B cell (primary cell): ENCODE measurements at regions of chr12 and their contacts with region 1.

Region 1: DNA sequence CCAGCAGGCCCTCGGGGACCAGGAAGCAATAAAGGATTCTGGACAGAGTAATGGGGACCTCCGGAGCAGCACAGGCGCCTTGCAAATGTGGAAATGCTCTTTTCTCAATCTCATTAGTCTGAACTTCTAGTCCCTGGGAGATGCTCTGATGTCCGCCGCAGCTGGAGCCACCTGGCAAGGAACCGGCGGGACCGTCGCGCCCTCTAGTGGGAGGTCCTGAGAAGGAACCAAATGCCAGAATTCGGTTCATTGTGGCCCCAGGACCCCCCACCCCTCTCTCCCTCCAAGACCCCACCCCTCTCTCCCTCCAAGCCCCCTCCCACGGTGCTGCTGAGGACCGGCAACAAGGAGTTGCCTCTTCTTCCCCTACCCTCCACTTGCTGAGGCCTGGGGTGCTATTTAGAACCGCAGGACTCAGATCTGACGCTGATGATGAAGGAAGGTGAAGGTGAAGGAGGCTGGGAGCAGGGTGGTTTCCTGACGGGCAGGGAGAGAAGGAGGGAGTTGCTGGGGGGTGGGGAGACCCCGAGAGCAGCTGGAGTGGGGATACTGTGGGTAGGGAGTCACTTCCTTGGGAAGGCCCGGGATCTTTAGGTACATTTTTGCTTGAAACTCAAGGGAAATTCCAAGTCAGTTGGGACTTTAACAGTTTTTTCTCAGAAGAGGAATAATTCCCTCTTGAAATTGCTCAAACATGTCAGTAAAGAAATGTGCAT is 42.5 kb downstream of the SMIM41 start:
- DNase-seq: peak; percentile 73
- ATAC-seq: no peak
- H3K4me3 ChIP-seq: no peak overlapping the region
- H3K4me3 Mint-ChIP-seq: no peak overlapping the region
- H3K27ac ChIP-seq: no peak overlapping the region
- H3K27ac Mint-ChIP-seq: peak overlapping the region; percentile 74
- H3K4me1 ChIP-seq: peaks cover 25 to 36% of the 10 kb centered on the region in 2 donors
- H3K4me1 Mint-ChIP-seq: peaks cover 38% of the 10 kb centered on the region
- H3K27me3 ChIP-seq: peaks cover 0 to 28% (median 8%) of the 10 kb centered on the region in 4 experiments
- H3K27me3 Mint-ChIP-seq: peaks cover 10% of the 10 kb centered on the region
- CTCF ChIP-seq: peak; percentile 87

Region 2: DNA sequence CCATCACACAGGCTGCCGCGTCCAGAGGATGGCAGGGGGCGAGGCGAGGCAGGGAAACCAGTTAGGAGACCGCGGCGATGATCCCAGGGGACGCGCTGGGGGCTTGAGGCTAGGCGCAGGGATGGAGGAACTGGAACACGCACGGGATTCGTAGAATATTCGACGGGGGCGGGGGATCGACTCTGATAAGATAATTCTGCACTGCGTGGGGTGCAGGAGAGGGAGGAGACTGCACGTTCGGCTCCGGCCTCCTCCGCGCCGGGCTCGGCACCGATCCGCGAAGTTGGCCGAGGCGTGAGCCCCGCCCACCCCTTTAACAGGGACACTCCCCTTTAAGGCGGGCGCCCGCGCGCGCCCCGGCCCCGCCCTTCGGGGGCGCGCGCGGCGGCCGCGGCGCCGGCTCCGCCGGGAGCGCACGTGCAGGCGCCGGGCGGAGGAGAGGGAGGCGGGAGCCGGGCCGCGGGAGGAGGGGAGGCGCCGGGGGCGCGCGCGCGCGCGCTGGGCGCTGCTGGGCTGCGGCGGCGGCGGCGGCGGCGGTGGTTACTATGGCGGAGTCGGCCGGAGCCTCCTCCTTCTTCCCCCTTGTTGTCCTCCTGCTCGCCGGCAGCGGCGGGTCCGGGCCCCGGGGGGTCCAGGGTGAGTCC is 170.7 kb before region 1 on chr12 and contains the start of gene ACVR1B:
- CTCF ChIA-PET with region 1: no interaction called
- POLR2A ChIA-PET with region 1: no interaction called
- intact Hi-C with region 1: loop called (anchors 5 kb)
- DNase-seq: peak; percentile 90
- ATAC-seq: peak; percentile 93
- H3K4me3 ChIP-seq: peak within 1 kb of the TSS; percentile 48 to 80 (median 75)
- H3K4me3 Mint-ChIP-seq: peak within 1 kb of the TSS; percentile 97
- H3K27ac ChIP-seq: peak within 1 kb of the TSS; percentile 6 to 60
- H3K27ac Mint-ChIP-seq: peak within 1 kb of the TSS; percentile 80
- H3K4me1 ChIP-seq: peaks cover 9 to 18% of the 10 kb centered on the region in 2 donors
- H3K4me1 Mint-ChIP-seq: peaks cover 26% of the 10 kb centered on the region
- H3K27me3 ChIP-seq: peaks cover 0 to 28% (median 6%) of the 10 kb centered on the region in 4 experiments
- H3K27me3 Mint-ChIP-seq: peaks cover 27% of the 10 kb centered on the region
- CTCF ChIP-seq: no peak
- total RNA-seq, gene ACVR1B: 8.7 and 10.6 TPM in 2 replicates

Region 3: GRCh38 chr12:51994959-51995358 is 127.0 kb before region 1 on chr12:
- CTCF ChIA-PET with region 1: interaction called, 13 read pairs
- POLR2A ChIA-PET with region 1: no interaction called
- intact Hi-C with region 1: loop called (anchors 1 kb)
- DNase-seq: no peak
- ATAC-seq: no peak
- H3K4me3 ChIP-seq: no peak overlapping the region
- H3K4me3 Mint-ChIP-seq: no peak overlapping the region
- H3K27ac ChIP-seq: no peak overlapping the region
- H3K27ac Mint-ChIP-seq: no peak overlapping the region
- H3K4me1 ChIP-seq: no peaks in the 10 kb centered on the region
- H3K4me1 Mint-ChIP-seq: peaks cover 2% of the 10 kb centered on the region
- H3K27me3 ChIP-seq: no peaks in the 10 kb centered on the region
- H3K27me3 Mint-ChIP-seq: no peaks in the 10 kb centered on the region
- CTCF ChIP-seq: no peak